Activated CD4-positive, alpha-beta memory T cell treated with anti-CD3 and anti-CD28 coated beads for 36 hours (primary cell): ENCODE measurements at regions of chr10 and their contacts with region 1.

Region 1: DNA sequence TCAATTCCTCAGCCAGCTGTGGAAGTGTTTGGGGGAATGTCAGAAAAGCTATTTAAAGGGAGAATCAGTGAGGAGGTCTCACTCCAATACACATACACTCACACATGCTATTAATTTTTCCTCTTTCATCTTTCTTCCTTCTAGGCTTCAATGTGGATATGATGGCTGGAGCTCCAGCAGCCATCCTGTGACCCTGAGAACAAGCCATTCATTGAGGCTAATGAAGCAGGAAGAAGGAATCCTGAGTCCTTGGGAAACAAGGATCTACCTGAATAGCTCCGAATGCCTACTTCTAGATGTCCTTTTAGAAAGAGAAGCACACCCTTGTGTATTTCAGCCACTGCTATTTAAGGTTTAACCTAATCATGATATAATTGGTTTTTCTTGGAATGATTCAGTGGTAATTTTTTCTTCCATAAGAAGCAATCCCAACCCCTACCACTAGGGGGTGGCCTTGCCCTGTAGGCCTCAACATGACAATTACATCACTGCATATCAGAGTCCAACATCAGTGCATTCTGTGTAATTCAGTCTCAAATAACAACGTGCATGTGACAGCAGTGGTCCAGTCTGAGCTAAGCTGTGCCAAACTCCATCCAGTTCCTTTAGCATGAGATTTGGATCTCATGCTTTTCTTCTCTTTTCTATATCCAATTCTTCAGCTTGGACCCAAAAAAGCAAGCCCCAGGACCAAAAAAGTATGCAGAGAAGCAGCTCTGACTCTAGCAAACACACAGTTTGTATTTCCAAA is 85.3 kb upstream of the ANKRD1 start:
- DNase-seq: peak; percentile 73
- H3K4me3 Mint-ChIP-seq: no peak overlapping the region
- H3K27ac Mint-ChIP-seq: no peak overlapping the region
- H3K4me1 Mint-ChIP-seq: peaks cover 30% of the 10 kb centered on the region
- H3K27me3 Mint-ChIP-seq: no peaks in the 10 kb centered on the region

Region 2: DNA sequence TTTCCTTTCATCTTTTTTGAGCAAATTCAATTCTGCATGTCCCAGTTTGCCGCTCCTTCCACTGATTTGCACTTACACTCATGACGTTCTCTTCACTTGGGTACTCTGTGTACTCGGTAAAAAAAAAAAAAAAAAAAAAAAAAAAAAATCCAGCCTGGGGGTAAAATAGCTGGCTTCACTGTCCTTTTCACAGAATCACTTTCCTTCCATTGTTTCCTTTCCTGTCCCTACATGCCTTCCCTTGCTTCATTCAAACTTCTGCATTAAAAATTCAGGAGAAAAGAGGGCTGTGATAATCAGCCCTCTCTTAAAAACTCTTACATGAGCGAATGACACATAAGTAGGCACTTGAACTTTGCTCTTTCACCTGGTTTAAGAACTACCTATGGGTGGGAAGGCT is 94.0 kb before region 1 on chr10:
- CTCF ChIA-PET with region 1: interaction called, 8 read pairs
- POLR2A ChIA-PET with region 1: no interaction called
- intact Hi-C with region 1: loop called (anchors 1 kb)
- DNase-seq: no peak
- H3K4me3 Mint-ChIP-seq: no peak overlapping the region
- H3K27ac Mint-ChIP-seq: no peak overlapping the region
- H3K4me1 Mint-ChIP-seq: peaks cover 2% of the 10 kb centered on the region
- H3K27me3 Mint-ChIP-seq: no peaks in the 10 kb centered on the region

Region 3: GRCh38 chr10:91034494-91035159 is 28.5 kb after region 1 on chr10:
- CTCF ChIA-PET with region 1: interaction called, 4 read pairs
- POLR2A ChIA-PET with region 1: no interaction called
- intact Hi-C with region 1: loop called (anchors 1 kb)
- DNase-seq: no peak
- H3K4me3 Mint-ChIP-seq: no peak overlapping the region
- H3K27ac Mint-ChIP-seq: peak overlapping the region; percentile 60
- H3K4me1 Mint-ChIP-seq: peaks cover 14% of the 10 kb centered on the region
- H3K27me3 Mint-ChIP-seq: no peaks in the 10 kb centered on the region

Region 4: GRCh38 chr10:91163269-91163868 is 157.2 kb after region 1 on chr10:
- CTCF ChIA-PET with region 1: interaction called, 4 read pairs
- POLR2A ChIA-PET with region 1: interaction called, 3 read pairs
- intact Hi-C with region 1: loop called (anchors 1 kb)
- DNase-seq: peak; percentile 79
- H3K4me3 Mint-ChIP-seq: peak overlapping the region; percentile 82
- H3K27ac Mint-ChIP-seq: peak overlapping the region; percentile 87
- H3K4me1 Mint-ChIP-seq: peaks cover 47% of the 10 kb centered on the region
- H3K27me3 Mint-ChIP-seq: no peaks in the 10 kb centered on the region

Region 5: DNA sequence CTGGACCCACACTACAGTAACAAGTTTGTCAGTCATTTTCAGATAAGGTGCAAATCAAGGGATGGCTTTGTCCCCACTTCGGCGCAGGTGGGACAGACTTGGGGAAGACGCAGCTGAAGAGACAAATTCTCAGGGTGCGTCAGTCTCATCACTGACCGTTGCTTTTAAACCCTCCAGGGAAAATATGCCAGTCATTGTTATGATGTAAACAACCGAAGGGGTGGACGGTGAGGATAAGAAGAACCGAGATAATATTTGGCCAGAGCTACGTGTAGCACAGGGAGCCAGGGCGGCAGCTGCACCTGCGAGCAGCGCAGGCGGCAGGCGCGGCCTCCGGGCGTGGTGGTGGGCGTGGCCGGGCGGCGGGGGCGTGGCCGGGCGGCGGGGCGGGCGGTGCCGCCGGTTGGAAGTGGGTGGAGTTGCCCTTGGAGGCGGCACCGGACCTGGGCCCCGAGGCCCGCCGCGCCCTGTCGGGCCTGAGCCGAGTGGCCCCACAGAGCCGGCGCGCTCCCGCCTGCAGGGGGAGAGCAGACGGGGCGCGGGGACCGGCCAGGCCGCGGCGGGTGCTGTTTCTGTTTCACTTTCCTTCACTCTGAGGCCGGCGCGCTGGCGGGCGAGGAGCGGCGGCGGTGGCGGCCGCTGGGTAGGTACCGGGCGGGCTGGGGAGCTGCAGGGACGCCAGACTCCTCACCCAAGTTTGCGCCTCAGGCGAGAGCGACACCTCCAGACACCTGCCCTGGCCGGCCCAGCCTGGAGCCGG is 214.2 kb after region 1 on chr10 and contains the start of gene PCGF5:
- CTCF ChIA-PET with region 1: interaction called, 5 read pairs
- POLR2A ChIA-PET with region 1: no interaction called
- intact Hi-C with region 1: loop called (anchors 1 kb)
- DNase-seq: peak; percentile 94
- H3K4me3 Mint-ChIP-seq: peak within 1 kb of the TSS; percentile 90
- H3K27ac Mint-ChIP-seq: peak within 1 kb of the TSS; percentile 64
- H3K4me1 Mint-ChIP-seq: peaks cover 52% of the 10 kb centered on the region
- H3K27me3 Mint-ChIP-seq: no peaks in the 10 kb centered on the region
- total RNA-seq, gene PCGF5: 42.9 to 46.8 TPM

Region 6: DNA sequence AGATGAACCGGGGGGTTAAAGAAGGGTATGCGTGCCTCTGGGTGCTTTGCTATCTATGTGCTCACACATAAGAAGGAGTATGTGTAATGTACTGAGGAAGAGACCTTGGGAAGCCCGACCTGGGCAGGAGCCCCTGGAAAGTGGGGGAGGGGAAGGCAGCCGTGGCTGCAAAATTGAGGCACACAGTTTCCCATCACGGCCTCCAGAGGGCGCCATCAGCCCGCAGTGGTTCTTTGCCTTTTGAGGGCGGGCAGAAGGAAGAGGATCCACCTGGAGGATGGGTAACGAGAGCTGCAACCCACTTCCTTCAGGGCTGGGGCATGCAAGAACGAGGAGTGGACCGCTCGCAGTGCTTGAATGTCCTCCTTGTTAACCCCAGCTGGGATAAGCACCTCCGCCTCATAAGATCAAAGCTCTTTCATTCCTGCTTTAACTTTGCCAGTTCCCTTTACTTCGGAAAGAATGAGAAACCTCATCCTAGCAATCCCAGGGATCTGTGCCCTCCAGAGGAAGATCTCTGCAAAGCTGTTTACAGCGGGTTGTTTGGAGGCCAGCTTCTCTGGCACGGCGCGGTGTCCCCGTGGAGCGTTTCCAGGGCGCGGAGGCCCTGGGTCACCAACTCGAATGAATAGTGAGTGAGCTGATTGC is 292.2 kb after region 1 on chr10:
- CTCF ChIA-PET with region 1: interaction called, 19 read pairs
- POLR2A ChIA-PET with region 1: no interaction called
- intact Hi-C with region 1: loop called (anchors 2 kb)
- DNase-seq: peak; percentile 89
- H3K4me3 Mint-ChIP-seq: peak overlapping the region; percentile 60
- H3K27ac Mint-ChIP-seq: no peak overlapping the region
- H3K4me1 Mint-ChIP-seq: peaks cover 8% of the 10 kb centered on the region
- H3K27me3 Mint-ChIP-seq: peaks cover 4% of the 10 kb centered on the region